ENCODE measurements at regions of chr3 and their contacts with region 1.

Region 1: DNA sequence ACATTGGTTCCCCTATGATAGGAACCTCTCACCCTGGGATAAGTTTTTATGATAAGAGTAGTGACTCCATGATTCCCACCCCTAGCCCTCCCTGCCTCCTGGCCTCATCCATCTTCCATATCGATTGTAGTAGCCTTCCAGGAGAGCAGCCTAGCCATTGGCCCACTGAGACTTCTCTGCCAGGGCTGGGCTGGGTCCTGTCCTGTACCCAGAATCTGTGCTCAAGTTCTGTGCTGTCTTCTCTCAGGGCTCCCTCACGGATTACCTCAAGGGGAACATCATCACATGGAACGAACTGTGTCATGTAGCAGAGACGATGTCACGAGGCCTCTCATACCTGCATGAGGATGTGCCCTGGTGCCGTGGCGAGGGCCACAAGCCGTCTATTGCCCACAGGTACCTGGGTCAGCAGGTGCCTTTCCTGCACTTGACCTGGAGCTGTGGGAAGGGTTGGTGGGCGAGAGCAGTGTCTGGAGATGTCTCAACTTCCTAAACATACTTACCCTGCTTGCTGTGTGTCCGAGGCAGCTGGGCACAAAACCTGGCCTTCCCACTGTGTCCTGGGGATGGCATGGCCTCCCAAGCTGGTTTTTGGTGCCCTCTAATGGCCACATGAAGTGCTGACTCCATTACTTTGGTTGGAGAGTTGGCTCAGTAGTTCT is 16.6 kb upstream of the EXOG start:
- DNase-seq: no peak
- H3K4me3 ChIP-seq: no peak overlapping the region
- H3K27ac ChIP-seq: no peak overlapping the region
- H3K4me1 ChIP-seq: no peaks in the 10 kb centered on the region
- H3K27me3 ChIP-seq: no peaks in the 10 kb centered on the region
- CTCF ChIP-seq: peak; percentile 53 to 86 (median 74)
- POLR2A ChIP-seq: no peak

Region 2: DNA sequence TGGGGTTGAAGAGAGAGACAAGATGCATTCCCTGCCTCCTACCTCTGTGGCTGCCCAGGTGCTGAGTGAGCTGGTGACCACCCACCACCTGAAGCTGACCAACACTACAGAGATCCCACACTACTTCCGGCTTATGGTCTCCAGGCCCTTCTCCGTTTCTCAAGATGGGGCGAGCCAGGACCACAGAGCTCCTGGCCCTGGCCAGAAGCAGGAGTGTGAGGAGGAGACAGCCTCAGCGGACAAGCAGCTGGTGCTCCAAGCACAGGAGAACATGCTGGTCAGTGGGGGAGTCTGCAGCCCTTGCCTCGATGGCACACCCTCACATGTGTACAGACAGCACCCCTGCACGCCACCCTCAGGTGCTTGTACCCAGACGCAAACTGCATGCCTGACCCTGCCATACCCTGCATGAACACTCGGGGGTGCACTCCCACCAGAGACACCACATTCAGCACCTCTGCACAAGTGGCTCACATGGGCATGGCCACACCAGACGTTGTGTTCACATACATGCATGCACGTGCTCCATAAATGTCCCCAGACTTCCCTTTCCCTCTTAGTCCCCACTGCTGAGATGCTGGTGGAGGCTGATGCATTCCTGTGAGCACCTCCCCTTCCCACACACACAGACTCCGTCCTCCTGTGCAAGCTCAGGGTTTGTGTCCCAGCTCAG is 361.7 kb before region 1 on chr3:
- intact Hi-C with region 1: loop called (anchors 10 kb)
- DNase-seq: peak; percentile 7
- H3K4me3 ChIP-seq: no peak overlapping the region
- H3K27ac ChIP-seq: no peak overlapping the region
- H3K4me1 ChIP-seq: no peaks in the 10 kb centered on the region
- H3K27me3 ChIP-seq: no peaks in the 10 kb centered on the region
- CTCF ChIP-seq: peak; percentile 53 to 88 (median 73)
- POLR2A ChIP-seq: no peak

Region 3: GRCh38 chr3:38346587-38347410 is 132.8 kb before region 1 on chr3 and contains the start of gene XYLB:
- intact Hi-C with region 1: loop called (anchors 2 kb)
- DNase-seq: peak; percentile 14
- H3K4me3 ChIP-seq: peak within 1 kb of the TSS; percentile 56 to 89 (median 76)
- H3K27ac ChIP-seq: peak within 1 kb of the TSS in 3 of 4 donors; percentile 67 to 74 (median 68)
- H3K4me1 ChIP-seq: peaks cover 0 to 31% (median 7%) of the 10 kb centered on the region in 3 donors
- H3K27me3 ChIP-seq: no peaks in the 10 kb centered on the region
- CTCF ChIP-seq: peak; percentile 68 to 86 (median 80)
- POLR2A ChIP-seq: no peak
- total RNA-seq, gene XYLB: 2.4 to 5.0 (median 2.5) TPM

Measured in esophagus squamous epithelium (tissue), 5 donors.